ENCODE measurements at regions of chr5 and their contacts with region 1.

Region 1: GRCh38 chr5:14644623-14645237 is 19.8 kb upstream of the OTULIN start:
- DNase-seq: no peak
- CTCF ChIP-seq: no peak

Region 2: DNA sequence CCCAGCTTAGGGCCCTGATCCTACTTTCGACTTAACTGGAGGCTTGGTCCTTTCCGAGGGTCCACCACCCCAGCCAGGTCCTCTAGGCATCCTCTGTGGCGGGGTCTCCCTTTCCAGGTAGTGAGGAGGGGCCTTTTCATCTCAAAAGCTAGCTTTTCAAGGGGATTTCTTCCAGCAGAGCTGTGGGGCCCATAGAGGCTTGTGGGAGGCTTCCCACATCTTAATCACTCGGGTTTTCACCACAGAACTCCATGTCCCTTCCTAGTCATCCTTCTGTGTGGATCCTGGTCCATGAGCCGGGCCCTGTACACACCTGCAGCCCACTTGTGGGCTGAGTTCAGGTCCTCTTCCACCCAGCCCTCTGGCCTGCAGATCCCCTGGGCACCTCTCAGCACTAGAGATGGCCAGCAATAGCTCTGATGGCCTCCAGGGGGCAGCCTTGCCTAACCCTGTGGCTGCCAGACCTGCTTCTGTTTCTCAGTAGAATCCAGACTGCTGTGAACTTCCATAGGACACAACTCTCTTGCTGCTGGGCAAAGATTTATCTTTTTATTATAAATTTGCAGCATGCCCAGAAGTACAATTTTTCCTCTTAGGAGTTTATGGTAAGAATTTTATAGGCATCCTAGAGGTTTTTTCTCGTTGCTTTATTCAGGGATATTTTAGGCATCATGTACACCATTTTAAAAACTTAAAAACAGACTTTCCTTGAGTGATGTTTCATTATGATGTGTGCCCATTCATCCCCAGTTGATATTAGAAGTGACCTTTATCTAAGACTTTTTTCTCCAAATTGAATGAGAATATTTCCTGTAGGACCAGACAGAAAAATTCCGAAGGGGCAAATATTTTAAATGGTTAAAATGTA is 292.7 kb before region 1 on chr5:
- CTCF ChIA-PET with region 1: interaction called, 61 read pairs
- POLR2A ChIA-PET with region 1: no interaction called
- DNase-seq: peak; percentile 78
- CTCF ChIP-seq: peak; percentile 98

Region 3: DNA sequence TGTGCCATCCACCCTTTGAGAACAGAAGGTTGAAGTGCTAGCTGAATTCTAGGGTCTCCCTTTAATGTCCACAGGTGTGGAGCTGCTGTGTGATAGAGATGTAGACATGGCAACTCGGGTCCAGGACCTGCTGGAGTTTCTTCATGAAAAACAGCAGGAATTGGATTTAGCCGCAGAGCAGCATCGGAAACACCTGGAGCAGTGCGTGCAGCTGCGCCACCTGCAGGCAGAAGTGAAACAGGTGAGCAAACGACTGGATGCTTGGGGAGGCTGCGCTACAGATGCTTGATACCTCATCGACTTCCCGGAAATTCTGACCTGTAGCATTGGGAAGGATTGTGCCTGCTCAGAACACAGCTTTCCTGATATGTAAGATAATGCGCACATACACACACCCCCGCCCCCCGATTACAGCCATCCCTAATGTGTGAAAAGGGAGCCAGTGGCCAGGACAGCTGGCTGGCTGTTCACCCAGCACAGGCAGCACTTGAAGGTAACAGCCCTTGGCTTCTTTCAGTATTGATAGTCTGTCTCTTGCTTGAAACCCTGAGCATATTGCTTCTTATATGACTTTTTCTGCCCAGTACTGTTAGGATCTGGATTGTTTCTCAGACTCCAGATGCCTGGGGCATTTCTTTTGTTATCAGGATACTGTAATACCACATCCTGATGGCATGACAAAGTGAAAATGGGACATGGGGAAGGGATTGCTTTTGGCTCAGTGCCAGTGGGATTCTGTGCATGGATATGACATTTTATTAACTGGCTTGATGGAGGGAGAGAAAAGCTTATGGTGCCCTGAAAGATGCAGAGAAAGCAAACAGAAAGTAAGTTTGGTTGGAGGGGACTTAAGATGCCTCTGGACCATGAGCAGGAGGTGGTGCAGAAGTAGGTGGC is 279.9 kb before region 1 on chr5:
- CTCF ChIA-PET with region 1: interaction called, 30 read pairs
- POLR2A ChIA-PET with region 1: no interaction called
- DNase-seq: no peak
- CTCF ChIP-seq: peak; percentile 21

Region 4: GRCh38 chr5:14408969-14409586 is 235.7 kb before region 1 on chr5:
- CTCF ChIA-PET with region 1: interaction called, 10 read pairs
- POLR2A ChIA-PET with region 1: no interaction called
- DNase-seq: no peak
- CTCF ChIP-seq: no peak

Region 5: DNA sequence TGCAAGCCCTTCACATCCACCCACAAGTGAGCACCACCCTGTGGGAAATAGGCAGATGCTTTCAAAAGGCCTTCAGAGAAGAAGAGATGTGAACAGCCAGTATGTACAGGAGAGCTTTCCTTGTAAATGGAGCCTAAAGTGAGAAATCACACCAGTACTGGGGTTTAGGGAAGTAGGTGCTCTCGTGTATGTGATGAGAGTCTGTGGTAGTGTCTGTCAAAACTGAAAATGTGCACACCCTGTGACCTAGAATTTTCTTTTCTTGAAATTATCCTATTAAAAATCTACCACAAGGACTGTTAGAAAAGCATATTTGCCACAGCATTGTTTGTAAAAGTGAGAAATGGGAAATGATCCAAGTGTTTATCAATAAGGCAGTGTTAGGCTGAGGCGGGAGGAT is 46.5 kb before region 1 on chr5:
- CTCF ChIA-PET with region 1: no interaction called
- POLR2A ChIA-PET with region 1: no interaction called
- DNase-seq: no peak
- CTCF ChIP-seq: no peak

Region 6: DNA sequence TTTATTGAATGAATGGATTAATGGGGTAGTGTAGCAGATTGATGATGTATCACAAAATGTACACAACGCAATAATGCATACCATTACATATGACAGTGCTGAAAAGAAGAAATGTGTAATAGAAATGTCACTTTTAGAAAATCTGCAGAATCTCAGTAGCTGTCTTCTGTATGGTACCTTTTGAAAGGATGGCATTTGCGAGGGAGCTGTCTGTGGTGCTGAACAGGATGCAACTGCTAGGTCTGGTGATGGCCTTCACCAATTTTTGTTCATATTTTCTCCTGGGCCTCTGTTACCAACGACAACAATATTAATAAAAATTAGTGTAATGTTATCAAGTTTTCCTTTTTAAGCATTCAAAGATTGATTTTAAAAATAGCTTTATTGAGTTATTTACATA is 16.4 kb before region 1 on chr5:
- CTCF ChIA-PET with region 1: interaction called, 14 read pairs
- POLR2A ChIA-PET with region 1: no interaction called
- DNase-seq: peak; percentile 41
- CTCF ChIP-seq: no peak

Region 7: GRCh38 chr5:15719784-15720183 is 1075.1 kb after region 1 on chr5:
- CTCF ChIA-PET with region 1: no interaction called
- POLR2A ChIA-PET with region 1: no interaction called
- DNase-seq: no peak
- CTCF ChIP-seq: no peak

Measured in GM10248 (cell line).